Mucosa of descending colon (tissue), 3 donors: ENCODE measurements at regions of chr9 and their contacts with region 1.

Region 1: DNA sequence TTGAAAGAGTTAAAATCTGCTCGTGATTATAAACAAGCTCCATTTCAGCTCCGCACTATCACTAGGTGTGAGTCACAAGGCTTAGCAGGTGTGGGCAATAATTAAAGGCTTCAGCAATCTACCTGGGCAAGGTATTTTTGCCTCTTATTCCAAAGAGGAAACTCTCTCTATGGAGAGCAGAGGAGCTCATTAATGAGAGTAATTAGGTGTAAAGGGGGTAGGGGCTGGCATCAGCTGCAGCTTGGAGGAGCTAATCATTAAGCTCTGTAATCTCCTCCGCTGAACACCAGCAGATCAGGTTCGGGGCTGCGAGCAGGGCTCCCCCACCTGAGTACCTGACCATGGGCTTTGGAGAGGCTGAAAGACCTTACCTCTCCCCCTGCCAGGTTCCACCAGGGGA is 129.2 kb downstream of the CRB2 start:
- DNase-seq: peak in 2 of 3 donors; percentile 47 to 48
- ATAC-seq: peak; percentile 75
- H3K4me3 ChIP-seq: no peak overlapping the region
- H3K4me1 ChIP-seq: peaks cover 30% of the 10 kb centered on the region
- CTCF ChIP-seq: no peak

Region 2: DNA sequence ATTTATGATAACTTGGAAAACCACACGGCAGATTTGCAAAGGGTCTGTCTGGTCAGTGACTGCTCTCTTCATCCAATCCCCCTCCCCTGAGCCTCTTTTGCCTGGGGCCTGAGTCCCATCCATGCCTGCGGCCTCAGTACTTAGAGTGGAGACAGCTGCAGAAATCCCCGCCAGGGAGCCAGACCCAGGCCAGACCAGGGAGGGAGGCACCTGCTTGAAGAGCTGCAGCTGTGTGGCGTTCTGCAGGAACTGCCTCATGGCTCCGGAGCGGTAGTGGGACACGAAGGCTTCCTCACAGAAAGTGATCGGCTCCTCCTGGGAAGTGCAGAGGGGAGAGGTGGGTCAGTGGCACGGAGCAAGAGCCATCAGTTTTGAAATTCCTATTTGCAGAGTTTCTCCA is 27.6 kb before region 1 on chr9:
- intact Hi-C with region 1: loop called in 1 of 2 experiments (anchors 2 kb)
- DNase-seq: no peak
- ATAC-seq: no peak
- H3K4me3 ChIP-seq: no peak overlapping the region
- H3K4me1 ChIP-seq: peaks cover 40% of the 10 kb centered on the region
- CTCF ChIP-seq: no peak

Region 3: GRCh38 chr9:123620239-123620638 is 135.0 kb after region 1 on chr9:
- intact Hi-C with region 1: no loop called
- DNase-seq: no peak
- ATAC-seq: no peak
- H3K4me3 ChIP-seq: no peak overlapping the region
- H3K4me1 ChIP-seq: no peaks in the 10 kb centered on the region
- CTCF ChIP-seq: no peak